ENCODE measurements at regions of chr10 and their contacts with region 1.

Region 1: GRCh38 chr10:29245476-29245875 is 43.4 kb upstream of the LYZL1 start:
- DNase-seq: peak; percentile 3 to 79 (median 60)
- H3K4me3 ChIP-seq: peak overlapping the region in 5 of 59 donors; percentile 3 to 33 (median 14)
- H3K27ac ChIP-seq: peak overlapping the region in 39 of 59 donors; percentile 4 to 81 (median 44)
- H3K27me3 ChIP-seq: peaks cover 0 to 5% (median 0%) of the 10 kb centered on the region in 45 donors
- CTCF ChIP-seq: peak in 1 of 56 donors; percentile 10

Region 2: GRCh38 chr10:29039677-29040189 is 205.7 kb before region 1 on chr10:
- intact Hi-C with region 1: no loop called
- DNase-seq: no peak
- H3K4me3 ChIP-seq: no peak overlapping the region
- H3K27ac ChIP-seq: no peak overlapping the region
- H3K27me3 ChIP-seq: peaks cover 0 to 3% (median 0%) of the 10 kb centered on the region in 45 donors
- CTCF ChIP-seq: no peak

Region 3: DNA sequence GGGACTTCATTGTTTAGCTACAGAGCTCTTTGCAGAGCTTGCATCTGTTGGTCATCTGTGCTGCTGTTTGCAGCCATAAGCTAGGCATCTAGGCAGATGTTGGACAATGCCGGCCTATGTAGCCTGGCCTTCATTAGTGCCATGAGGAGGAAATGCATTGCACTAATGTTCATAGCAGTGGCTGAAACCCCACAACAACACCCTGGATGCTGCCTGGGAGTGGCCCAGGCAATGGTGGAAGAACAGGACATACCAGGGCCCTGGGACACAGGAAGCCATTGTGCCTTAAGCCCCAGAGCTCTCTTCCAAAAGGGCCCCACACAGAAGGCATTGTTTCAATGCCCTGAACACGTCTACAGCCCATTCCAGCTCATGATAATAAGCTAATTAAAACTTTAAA is 88.2 kb before region 1 on chr10:
- intact Hi-C with region 1: loop called in 1 of 2 experiments (anchors 1 kb)
- DNase-seq: peak in 9 of 10 donors; percentile 5 to 74 (median 47)
- H3K4me3 ChIP-seq: no peak overlapping the region
- H3K27ac ChIP-seq: peak overlapping the region in 16 of 59 donors; percentile 5 to 68 (median 33)
- H3K27me3 ChIP-seq: peaks cover 0 to 22% (median 0%) of the 10 kb centered on the region in 45 donors
- CTCF ChIP-seq: peak in 1 of 56 donors; percentile 10

Measured in dorsolateral prefrontal cortex (tissue), 120 donors.